Cardiac septum (tissue), 1 donor: ENCODE measurements at regions of chr13 and their contacts with region 1.

Region 1: GRCh38 chr13:102311901-102312300 is 89.9 kb downstream of the FGF14 start:
- DNase-seq: no peak

Region 2: DNA sequence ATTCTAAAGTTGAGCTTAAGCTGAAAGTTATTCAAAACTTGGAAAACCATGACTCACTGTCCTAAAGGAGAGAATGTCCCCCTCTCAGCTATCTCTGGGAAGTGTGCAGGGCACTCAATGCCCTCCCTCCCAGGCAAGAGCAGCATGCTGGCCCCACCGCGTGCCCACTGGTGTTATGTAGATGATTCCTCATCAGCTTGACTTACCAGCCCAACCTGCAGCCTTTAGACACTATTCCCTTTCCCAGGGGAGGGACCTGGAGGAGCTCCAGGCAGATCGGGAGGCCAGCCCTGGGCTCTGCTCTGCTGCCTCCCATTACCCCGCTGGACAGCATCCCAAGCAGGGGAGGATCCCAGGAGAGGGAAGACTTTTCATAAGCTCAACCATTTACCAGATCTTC is 34.6 kb before region 1 on chr13:
- intact Hi-C with region 1: loop called (anchors 5 kb)
- DNase-seq: no peak